ENCODE measurements at regions of chr9 and their contacts with region 1.

Region 1: DNA sequence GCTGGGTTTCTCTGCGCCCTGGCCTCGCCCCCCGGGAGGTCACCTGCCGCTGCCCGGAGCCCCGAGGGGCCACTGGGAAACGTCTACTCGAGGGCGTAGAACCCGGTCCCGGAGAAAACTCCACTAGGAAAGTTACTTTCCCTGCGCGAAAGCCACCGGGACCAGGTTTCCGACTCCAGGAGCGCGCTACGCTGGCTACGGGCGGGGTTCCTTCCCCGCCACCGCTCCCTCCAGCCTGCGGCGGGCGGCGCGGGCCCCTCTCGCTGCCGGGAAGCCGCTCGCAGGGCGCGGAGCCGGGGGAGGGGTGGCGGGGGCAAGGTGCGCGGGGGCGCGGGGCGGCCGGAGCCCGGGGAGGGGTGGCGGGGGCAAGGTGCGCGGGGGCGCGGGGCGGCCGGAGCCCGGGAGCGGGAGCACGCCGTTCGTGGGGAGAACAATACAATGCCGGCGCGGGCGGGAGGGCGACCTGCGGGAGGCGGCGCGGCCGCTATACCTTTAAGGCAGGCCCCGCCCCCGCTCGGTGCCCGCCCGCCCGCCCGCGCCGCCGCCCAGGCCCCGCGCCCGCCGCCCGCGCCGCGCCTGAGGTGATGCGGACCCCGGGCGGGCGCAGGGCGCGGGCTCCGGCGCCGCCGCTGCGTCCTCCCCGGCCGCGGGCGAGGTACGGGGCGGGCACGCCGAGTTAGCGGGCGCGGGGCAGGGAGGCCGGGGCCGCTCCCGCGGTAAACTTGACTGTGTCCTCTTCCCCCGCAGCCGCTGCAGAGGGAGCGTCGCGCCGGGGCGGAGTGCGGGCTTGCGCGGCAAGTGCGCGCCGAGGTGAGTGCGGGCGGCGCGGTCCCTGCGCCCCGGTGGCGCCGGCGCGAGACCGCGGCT is 278.1 kb downstream of the AOPEP start:
- DNase-seq: peak in 3 of 10 donors; percentile 63 to 91 (median 83)

Region 2: DNA sequence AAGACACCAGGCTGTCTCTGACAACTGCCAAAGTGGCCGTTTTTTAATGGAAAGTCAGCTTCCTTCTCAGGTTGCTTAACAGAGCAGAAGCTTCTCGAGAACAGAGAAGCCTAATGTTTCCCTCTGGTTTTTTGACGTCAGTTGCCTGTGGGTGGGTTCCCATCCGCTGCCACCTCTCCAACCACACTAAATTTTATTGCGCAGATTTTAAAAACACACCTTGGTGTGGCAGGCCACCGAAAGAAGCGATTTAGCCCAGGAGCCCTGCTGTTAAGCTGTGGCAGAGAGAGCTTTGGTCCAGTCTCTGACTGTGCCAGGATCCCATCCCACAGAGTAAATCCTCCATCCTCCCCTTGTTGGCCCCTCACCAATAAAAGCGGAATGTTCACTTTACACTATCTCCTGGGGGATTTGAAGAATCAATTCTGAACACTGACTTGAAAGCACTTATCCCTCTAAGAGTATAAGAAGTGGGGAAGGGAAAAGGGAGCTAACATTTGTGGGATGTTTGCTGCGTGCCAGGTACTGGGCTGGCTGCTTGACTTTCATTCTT is 96.6 kb before region 1 on chr9:
- intact Hi-C with region 1: loop called (anchors 5 kb)
- DNase-seq: peak in 1 of 10 donors; percentile 23

Region 3: GRCh38 chr9:95273369-95274022 is 268.9 kb after region 1 on chr9:
- intact Hi-C with region 1: no loop called
- DNase-seq: no peak